ENCODE measurements at regions of chr10 and their contacts with region 1.

Region 1: GRCh38 chr10:124741281-124741921 is 2.8 kb downstream of the FAM53B start:
- DNase-seq: peak; percentile 90

Region 2: GRCh38 chr10:124530215-124530665 is 211.2 kb before region 1 on chr10:
- in situ Hi-C with region 1: loop called (anchors 25 kb)
- DNase-seq: peak; percentile 86

Region 3: DNA sequence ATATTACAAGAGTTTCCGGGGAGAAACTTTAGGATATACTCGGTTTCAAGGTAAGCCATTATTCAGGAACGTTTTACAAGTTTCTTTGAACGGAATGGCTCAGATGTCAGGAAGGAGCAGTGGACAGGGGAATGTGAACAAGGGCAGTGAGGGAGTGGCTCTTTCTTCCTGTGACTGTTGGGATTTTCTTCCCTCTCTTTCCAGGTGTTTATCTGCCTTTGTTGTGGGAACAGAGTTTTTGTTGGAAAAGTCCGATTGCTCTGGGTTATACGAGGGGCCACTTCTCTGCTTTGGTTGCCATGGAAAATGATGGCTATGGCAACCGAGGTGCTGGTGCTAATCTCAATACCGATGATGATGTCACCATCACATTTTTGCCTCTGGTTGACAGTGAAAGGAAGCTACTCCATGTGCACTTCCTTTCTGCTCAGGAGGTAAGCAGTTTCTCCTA is 241.9 kb after region 1 on chr10:
- in situ Hi-C with region 1: no loop called
- DNase-seq: peak; percentile 50

Measured in KBM-7 (cell line).